Activated CD4-positive, alpha-beta T cell treated with anti-CD3 and anti-CD28 coated beads, Interleukin-2, amount 10 ng/mL, durations not matched to agents 24 days and 14 days (primary cell): ENCODE measurements at regions of chrX and their contacts with region 1.

Region 1: DNA sequence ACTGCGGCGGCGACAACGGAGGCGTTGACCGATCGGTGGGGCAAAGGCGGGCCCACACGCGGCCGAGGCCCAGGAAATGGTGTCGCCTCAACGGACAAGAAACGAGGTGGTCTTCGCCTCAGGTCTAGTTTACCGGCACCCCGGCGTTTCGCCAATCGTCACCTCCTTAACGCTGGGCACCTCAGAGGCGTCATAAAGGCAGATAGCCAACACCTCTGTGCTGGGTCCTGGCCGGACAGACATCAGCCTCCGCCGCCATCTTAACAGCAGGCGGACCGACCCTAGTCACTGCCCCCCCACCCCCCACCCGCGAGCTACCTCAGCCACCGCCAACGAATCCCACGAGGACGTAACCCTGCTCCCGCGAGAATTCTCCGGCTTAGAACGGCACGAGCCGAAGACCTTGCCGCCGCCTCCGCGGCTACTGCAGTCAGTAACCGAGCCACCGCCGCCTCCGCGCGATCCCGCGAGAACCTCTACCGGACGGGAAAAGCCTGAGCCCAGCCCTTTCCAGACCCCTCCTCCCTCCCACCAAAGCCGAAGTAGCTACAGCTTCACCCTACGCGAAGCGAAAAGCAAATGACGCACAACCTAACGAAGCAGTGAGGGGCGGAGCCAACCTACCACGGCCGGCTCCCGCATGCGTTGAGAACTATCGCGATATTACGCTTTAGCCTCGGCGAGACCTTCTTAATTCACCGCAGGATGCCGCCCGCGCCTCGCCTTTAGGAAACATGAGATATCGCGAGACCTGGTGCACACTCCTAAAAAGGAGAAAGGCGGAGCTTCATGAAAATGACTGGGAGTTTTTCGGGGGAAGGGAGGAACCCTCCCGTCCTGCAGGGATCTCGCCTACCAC is 2.7 kb downstream of the HUWE1 start:
- DNase-seq: peak; percentile 96
- H3K4me3 Mint-ChIP-seq: peak overlapping the region; percentile 97
- H3K27ac Mint-ChIP-seq: peak overlapping the region; percentile 97
- H3K4me1 Mint-ChIP-seq: peaks cover 20% of the 10 kb centered on the region
- H3K27me3 Mint-ChIP-seq: no peaks in the 10 kb centered on the region

Region 2: DNA sequence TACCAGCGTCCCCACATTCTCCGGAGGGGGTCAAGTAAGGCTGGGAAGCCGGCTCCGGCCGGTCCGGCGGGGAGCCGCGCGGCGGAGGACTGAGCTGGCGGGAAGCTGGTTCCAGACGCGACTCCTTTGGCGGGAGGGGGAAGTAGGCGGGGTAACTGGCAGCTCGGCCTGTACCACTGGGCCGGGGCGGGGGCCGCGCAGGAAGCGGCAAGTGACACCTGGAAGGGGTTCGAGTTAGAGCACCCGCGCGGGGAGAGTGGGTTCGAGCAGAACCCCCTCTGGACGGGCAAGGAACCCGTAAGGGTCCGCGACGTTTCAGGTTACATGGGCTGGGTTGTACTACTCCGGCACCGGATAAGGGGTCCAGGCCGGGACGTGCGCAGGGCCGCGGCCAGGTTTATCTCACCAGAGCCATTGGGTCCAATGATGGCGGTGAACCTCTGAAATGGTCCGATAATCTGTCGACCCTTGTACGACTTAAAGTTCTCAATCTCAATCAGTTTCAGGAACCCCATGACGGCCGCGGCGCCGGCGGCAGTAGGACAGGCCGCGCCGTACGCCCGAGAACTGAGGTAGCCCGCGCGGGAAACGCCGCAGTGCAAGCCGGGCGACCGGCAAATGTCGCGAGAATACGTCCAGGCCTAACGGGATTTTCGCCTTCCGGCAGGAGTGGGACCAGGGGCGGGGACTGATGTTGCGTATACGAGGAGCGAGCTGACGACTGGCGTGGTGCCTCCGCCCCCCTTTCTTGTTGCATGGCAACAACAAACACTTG is 261.5 kb before region 1 on chrX and contains the start of gene SMC1A:
- intact Hi-C with region 1: loop called (anchors 5 kb)
- DNase-seq: peak; percentile 98
- H3K4me3 Mint-ChIP-seq: peak within 1 kb of the TSS; percentile 98
- H3K27ac Mint-ChIP-seq: peak within 1 kb of the TSS; percentile 98
- H3K4me1 Mint-ChIP-seq: peaks cover 24% of the 10 kb centered on the region
- H3K27me3 Mint-ChIP-seq: no peaks in the 10 kb centered on the region
- total RNA-seq, gene SMC1A: 141 and 144 TPM in 2 replicates

Region 3: DNA sequence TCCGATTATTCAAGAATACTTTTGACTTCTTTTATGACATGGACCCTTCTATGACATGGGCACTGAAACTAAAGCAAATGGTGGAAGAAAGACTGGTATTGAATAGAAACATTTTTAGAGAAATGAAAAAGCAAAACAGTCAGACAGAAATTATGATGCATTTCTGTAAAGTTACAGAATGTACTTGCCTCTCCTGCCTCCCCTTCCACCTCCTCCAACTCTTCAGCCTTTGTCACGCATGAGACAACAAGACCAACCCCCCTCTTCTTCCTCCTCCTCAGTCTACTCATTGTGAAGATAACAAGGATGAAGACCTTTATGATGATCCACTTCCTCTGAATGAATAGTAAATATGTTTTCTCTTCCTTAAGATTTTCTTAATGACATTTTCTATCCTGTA is 49.0 kb after region 1 on chrX:
- intact Hi-C with region 1: loop called (anchors 1 kb)
- DNase-seq: no peak
- H3K4me3 Mint-ChIP-seq: peak overlapping the region; percentile 73
- H3K27ac Mint-ChIP-seq: peak overlapping the region; percentile 94
- H3K4me1 Mint-ChIP-seq: peaks cover 31% of the 10 kb centered on the region
- H3K27me3 Mint-ChIP-seq: no peaks in the 10 kb centered on the region

Region 4: GRCh38 chrX:53961861-53962260 is 278.1 kb after region 1 on chrX:
- intact Hi-C with region 1: loop called (anchors 10 kb)
- DNase-seq: no peak
- H3K4me3 Mint-ChIP-seq: no peak overlapping the region
- H3K27ac Mint-ChIP-seq: no peak overlapping the region
- H3K4me1 Mint-ChIP-seq: no peaks in the 10 kb centered on the region
- H3K27me3 Mint-ChIP-seq: no peaks in the 10 kb centered on the region

Region 5: DNA sequence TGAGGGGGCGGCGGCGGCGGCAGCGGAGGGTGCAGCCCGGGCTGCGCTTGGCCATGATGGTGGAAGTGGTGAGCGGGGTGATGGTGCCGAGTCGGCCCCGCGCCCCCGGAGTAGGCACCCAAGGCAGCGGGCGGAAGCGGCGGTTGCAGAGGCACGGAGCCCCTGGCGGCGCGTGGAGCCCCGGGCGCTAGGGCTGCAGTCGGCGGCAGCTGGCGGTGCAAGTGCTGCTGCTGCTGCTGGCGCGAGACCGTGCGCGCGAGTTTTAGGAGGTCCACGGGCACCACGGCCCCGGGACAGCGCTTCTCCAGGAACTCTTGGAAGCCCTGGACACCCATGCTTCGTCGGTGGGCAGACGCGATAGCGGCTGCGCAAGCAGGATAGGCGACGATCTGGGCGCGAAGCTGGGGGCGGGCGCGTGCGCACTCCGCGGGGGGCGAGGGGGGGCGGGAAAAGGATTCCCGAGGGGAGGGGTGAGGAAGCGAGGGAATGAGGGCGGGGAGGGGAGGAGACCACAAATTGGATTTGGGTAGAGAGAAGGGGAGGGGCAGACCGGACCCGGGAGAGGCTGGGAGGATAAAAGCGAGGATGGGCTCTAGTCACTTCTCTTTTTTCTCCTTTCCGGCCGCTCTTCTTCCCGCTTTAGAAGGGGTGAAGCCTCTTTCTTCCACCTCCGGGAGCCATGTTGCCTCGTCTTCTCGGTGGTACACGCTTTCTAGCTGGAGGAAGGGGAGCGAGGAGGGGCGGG is 499.3 kb after region 1 on chrX and contains the start of gene FAM120C:
- intact Hi-C with region 1: loop called (anchors 1 kb)
- DNase-seq: peak; percentile 84
- H3K4me3 Mint-ChIP-seq: peak within 1 kb of the TSS; percentile 88
- H3K27ac Mint-ChIP-seq: peak within 1 kb of the TSS; percentile 92
- H3K4me1 Mint-ChIP-seq: peaks cover 37% of the 10 kb centered on the region
- H3K27me3 Mint-ChIP-seq: no peaks in the 10 kb centered on the region
- total RNA-seq, gene FAM120C: 10.8 and 11.4 TPM in 2 replicates

Region 6: DNA sequence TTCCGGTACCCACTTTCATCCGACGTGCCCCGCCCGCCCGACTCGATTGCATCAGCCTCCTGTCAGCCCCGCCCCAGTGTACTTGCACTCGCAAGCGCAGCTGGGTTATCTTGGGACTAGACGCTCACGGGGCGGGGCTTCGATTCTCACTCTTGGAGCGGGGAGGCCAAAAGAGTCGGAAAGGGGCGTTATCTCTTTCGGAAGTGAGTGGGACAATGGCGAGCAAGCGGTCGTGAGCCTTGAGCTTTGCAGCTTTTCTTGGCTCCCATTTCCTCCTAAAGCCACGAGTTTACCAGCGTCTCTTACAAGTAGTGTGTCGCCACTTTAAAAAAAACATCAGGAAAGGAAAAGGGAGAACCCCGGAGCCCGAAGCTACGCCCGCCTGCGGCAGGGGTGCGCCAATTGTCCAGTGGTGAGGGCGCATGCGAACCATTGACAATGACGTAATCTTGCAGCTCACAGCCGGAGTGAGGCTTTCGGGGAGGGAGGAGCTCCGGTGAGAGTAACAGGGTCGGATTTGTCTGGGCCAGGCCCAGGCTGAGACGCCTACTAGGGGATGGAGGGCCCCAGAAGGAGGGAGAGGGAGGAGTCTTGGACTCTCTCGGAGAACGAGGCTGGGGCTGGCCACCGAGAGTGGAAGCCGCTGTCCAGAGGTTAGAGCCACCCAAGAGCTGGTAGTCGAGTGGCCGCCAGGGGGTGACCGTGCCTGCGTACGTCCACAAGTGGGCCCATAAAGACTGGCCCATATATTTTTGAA is 955.7 kb after region 1 on chrX:
- intact Hi-C with region 1: loop called (anchors 10 kb)
- DNase-seq: peak; percentile 96
- H3K4me3 Mint-ChIP-seq: peak overlapping the region; percentile 97
- H3K27ac Mint-ChIP-seq: peak overlapping the region; percentile 100
- H3K4me1 Mint-ChIP-seq: peaks cover 7% of the 10 kb centered on the region
- H3K27me3 Mint-ChIP-seq: no peaks in the 10 kb centered on the region